Posterior vena cava (tissue), 2 donors: ENCODE measurements at regions of chr6 and their contacts with region 1.

Region 1: DNA sequence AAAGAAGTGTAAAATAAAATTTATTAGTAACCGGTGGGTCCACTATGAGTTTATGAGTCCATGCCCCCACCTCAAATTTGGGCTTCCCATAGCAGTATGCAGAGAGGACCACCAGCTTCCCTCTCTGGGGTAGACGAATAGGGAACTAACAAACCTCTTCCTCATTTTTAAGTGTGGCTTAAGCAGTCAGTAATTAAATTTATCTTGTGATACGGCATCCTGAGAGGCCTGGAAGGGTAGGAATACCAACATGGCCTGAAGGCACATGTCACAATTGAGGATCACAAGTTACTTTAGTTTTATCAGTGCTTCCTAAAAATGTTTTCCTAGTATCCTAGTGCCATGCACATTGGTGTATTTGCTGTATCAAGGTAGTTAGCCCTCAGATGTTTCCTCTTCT is 239.9 kb downstream of the HIVEP2 start:
- DNase-seq: no peak

Region 2: GRCh38 chr6:142088858-142089216 is 616.2 kb before region 1 on chr6:
- intact Hi-C with region 1: loop called in 1 of 2 experiments (anchors 5 kb)
- DNase-seq: no peak

Region 3: GRCh38 chr6:142592876-142593275 is 112.2 kb before region 1 on chr6:
- intact Hi-C with region 1: no loop called
- DNase-seq: no peak